ENCODE measurements at regions of chr17 and their contacts with region 1.

Region 1: GRCh38 chr17:2054512-2055291 is at the start of gene HIC1:
- DNase-seq: peak; percentile 75
- H3K4me3 ChIP-seq: peak within 1 kb of the TSS; percentile 61 to 74 (median 72)
- H3K27ac ChIP-seq: peak within 1 kb of the TSS; percentile 64
- H3K4me1 ChIP-seq: peaks cover 20% of the 10 kb centered on the region
- H3K27me3 ChIP-seq: peaks cover 2 to 11% of the 10 kb centered on the region in 2 experiments
- CTCF ChIP-seq: peak; percentile 75 to 94
- POLR2A ChIP-seq: peak; percentile 70
- total RNA-seq, gene HIC1: 25.8 and 35.5 TPM in 2 replicates

Region 2: GRCh38 chr17:2070241-2071023 is 15.7 kb after region 1 on chr17:
- CTCF ChIA-PET with region 1: interaction called, 27 read pairs
- POLR2A ChIA-PET with region 1: interaction called, 3 read pairs
- dilution Hi-C with region 1: no loop called
- intact Hi-C with region 1: no loop called
- DNase-seq: no peak
- H3K4me3 ChIP-seq: no peak overlapping the region
- H3K27ac ChIP-seq: peak overlapping the region; percentile 93
- H3K4me1 ChIP-seq: peaks cover 62% of the 10 kb centered on the region
- H3K27me3 ChIP-seq: no peaks in the 10 kb centered on the region
- CTCF ChIP-seq: no peak
- POLR2A ChIP-seq: no peak

Region 3: DNA sequence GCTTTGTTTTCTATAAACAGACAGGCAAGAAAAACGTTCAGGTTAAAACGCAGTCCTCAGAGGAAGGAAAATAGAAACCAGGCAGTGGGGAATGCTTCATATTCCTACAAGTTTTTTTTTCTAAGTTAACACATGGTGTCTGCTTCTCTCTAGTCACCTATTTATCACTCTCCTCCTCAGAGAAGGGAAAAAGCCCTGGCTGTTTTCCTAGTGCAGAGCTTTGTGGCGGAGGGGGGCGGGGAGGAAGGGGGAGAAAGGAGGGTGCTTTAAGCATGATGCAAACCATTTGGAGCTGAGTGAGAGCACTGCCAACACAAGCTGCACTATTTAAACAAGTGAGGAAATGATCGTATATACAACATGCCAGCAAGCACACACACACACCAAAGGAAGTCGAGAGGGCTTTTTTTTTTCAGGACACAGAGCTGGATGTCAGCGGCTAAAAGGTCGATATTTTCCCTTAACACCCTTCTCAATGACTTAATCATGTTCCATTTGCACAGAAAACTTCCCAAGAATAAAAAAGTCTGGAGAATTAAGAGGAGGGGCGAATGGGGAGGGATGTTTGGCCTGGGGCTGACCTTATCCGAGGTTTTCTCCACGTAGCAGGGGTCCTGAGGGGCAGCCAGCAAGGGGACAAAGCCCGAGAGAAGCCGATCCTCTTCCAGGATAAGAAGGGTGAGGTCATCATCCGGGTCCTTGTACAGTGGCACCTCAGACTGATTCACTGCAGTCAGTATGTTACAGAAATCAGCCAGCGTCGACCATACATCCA is 117.6 kb after region 1 on chr17:
- CTCF ChIA-PET with region 1: interaction called, 25 read pairs
- POLR2A ChIA-PET with region 1: interaction called, 5 read pairs
- dilution Hi-C with region 1: no loop called
- intact Hi-C with region 1: no loop called
- DNase-seq: peak; percentile 98
- H3K4me3 ChIP-seq: peak overlapping the region in 1 of 3 experiments; percentile 40
- H3K27ac ChIP-seq: peak overlapping the region; percentile 94
- H3K4me1 ChIP-seq: peaks cover 59% of the 10 kb centered on the region
- H3K27me3 ChIP-seq: no peaks in the 10 kb centered on the region
- CTCF ChIP-seq: no peak
- POLR2A ChIP-seq: peak; percentile 43

Region 4: GRCh38 chr17:2232244-2232638 is 177.5 kb after region 1 on chr17:
- CTCF ChIA-PET with region 1: interaction called, 35 read pairs
- POLR2A ChIA-PET with region 1: no interaction called
- dilution Hi-C with region 1: no loop called
- intact Hi-C with region 1: no loop called
- DNase-seq: peak; percentile 34
- H3K4me3 ChIP-seq: no peak overlapping the region
- H3K27ac ChIP-seq: peak overlapping the region; percentile 13
- H3K4me1 ChIP-seq: peaks cover 9% of the 10 kb centered on the region
- H3K27me3 ChIP-seq: no peaks in the 10 kb centered on the region
- CTCF ChIP-seq: no peak
- POLR2A ChIP-seq: no peak

Region 5: GRCh38 chr17:2266045-2266864 is 211.6 kb after region 1 on chr17:
- CTCF ChIA-PET with region 1: interaction called, 11 read pairs
- POLR2A ChIA-PET with region 1: no interaction called
- dilution Hi-C with region 1: no loop called
- intact Hi-C with region 1: no loop called
- DNase-seq: peak; percentile 49
- H3K4me3 ChIP-seq: no peak overlapping the region
- H3K27ac ChIP-seq: no peak overlapping the region
- H3K4me1 ChIP-seq: no peaks in the 10 kb centered on the region
- H3K27me3 ChIP-seq: no peaks in the 10 kb centered on the region
- CTCF ChIP-seq: no peak
- POLR2A ChIP-seq: no peak

Region 6: GRCh38 chr17:2416010-2416734 is 361.5 kb after region 1 on chr17:
- CTCF ChIA-PET with region 1: interaction called, 9 read pairs
- POLR2A ChIA-PET with region 1: no interaction called
- dilution Hi-C with region 1: no loop called
- intact Hi-C with region 1: loop called (anchors 5 kb)
- DNase-seq: peak; percentile 94
- H3K4me3 ChIP-seq: no peak overlapping the region
- H3K27ac ChIP-seq: peak overlapping the region; percentile 32
- H3K4me1 ChIP-seq: no peaks in the 10 kb centered on the region
- H3K27me3 ChIP-seq: no peaks in the 10 kb centered on the region
- CTCF ChIP-seq: peak; percentile 88 to 92
- POLR2A ChIP-seq: no peak

Measured in endothelial cell of umbilical vein (primary cell).